Esophagus squamous epithelium (tissue), 5 donors: ENCODE measurements at regions of chr13 and their contacts with region 1.

Region 1: GRCh38 chr13:78137404-78138142 is 218.9 kb upstream of the EDNRB start:
- DNase-seq: no peak
- H3K4me3 ChIP-seq: no peak overlapping the region
- H3K27ac ChIP-seq: no peak overlapping the region
- H3K4me1 ChIP-seq: no peaks in the 10 kb centered on the region
- H3K27me3 ChIP-seq: no peaks in the 10 kb centered on the region
- CTCF ChIP-seq: peak; percentile 18 to 67 (median 48)
- POLR2A ChIP-seq: no peak

Region 2: GRCh38 chr13:78576261-78576660 is 438.7 kb after region 1 on chr13:
- intact Hi-C with region 1: no loop called
- DNase-seq: no peak
- H3K4me3 ChIP-seq: no peak overlapping the region
- H3K27ac ChIP-seq: no peak overlapping the region
- H3K4me1 ChIP-seq: no peaks in the 10 kb centered on the region
- H3K27me3 ChIP-seq: peaks cover 0 to 22% (median 0%) of the 10 kb centered on the region in 4 donors
- CTCF ChIP-seq: no peak
- POLR2A ChIP-seq: no peak

Region 3: DNA sequence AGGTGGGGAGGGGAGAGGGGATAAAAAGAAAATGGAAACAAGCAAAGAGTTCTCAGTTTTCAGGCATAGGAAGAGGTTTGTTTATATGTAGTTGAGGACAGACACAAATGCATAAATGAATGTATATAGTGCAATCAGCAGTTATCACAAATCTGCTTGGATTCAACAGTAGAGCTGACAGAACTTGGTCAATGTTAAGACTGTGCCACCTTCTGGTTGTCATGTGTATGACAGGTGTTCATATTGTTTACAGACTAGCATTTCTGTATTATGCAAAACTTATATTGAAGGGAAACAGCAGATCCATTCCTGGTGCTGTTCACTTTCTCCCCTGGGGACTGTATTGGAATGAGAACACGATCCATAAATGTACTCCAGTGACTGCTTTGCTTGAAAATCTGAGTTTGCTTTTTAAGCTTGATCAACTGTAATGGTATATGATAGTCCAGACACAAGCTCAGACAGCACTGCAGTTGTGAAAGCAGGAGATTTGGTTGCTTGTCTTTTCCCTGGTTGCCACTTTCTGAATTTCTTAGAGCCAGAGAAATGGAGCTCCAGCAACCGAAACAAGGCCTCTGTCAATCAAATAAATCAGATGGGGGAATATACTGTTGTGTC is 840.9 kb after region 1 on chr13:
- intact Hi-C with region 1: loop called (anchors 5 kb)
- DNase-seq: peak; percentile 0
- H3K4me3 ChIP-seq: no peak overlapping the region
- H3K27ac ChIP-seq: no peak overlapping the region
- H3K4me1 ChIP-seq: no peaks in the 10 kb centered on the region
- H3K27me3 ChIP-seq: no peaks in the 10 kb centered on the region
- CTCF ChIP-seq: peak; percentile 36 to 64 (median 56)
- POLR2A ChIP-seq: no peak